ENCODE measurements at regions of chr19 and their contacts with region 1.

Region 1: DNA sequence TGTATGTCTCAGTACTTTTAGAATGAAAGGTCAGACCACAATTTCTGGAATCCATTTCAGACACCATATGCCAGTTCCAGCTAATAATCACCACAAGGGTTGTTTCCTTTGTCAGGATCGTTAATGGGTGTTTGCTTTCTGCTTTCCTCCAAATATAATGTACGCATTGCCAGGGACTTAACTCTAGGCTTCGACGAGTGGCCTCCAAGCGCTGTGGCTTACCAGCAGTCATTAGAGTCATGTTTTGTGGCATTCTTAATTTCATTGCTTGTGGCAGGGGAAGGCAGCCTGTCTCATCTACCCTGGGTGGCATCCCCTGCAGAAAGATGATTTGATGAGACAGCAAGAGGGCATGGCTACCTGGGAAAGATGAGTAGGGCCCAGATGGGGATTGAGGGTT is 22.5 kb downstream of the SAFB start:
- DNase-seq: no peak
- H3K4me3 ChIP-seq: no peak overlapping the region
- H3K27ac ChIP-seq: no peak overlapping the region
- H3K4me1 ChIP-seq: no peaks in the 10 kb centered on the region
- H3K27me3 ChIP-seq: no peaks in the 10 kb centered on the region
- CTCF ChIP-seq: no peak
- POLR2A ChIP-seq: no peak

Region 2: DNA sequence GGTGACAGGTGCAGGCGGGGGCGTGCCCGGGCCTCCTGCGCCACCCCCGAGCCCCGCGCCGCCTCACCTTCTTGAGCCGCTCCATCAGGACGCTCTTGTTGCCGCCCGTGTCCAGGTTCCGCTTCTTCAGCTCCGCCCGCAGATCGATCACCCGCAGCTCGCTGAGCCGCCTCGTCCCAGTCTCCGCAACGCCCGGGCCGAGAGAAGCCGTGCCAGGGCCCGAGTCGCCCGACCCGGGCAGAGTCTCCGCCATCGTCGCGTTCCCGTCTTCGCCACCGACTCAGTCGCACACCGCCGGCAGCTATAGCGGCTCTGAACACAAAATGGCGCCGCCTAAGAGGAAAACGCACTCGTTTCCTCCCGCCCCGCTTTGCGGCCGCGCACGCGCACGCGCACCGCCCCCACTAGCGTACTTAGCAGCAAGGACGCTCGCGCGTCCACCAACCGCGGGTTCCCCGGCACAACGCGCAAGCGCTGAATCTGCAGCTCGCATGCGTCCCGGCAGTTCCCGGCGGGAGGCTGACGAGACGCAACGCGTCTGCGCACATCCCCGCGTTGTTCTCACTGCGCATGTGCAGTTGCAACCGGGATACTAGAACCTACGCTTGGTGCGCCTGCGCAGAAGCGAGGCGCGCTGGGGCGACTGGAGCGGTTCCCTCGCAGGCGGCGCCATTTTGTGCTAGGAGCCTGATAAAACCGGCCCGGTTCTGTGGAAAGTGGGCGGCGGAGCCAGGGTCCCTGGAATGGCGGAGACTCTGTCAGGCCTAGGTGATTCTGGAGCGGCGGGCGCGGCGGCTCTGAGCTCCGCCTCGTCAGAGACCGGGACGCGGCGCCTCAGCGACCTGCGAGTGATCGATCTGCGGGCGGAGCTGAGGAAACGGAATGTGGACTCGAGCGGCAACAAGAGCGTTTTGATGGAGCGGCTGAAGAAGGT is 22.7 kb before region 1 on chr19 and contains the starts of genes SAFB and SAFB2:
- CTCF ChIA-PET with region 1: no interaction called
- POLR2A ChIA-PET with region 1: no interaction called
- dilution Hi-C with region 1: no loop called
- intact Hi-C with region 1: no loop called
- DNase-seq: peak; percentile 100
- H3K4me3 ChIP-seq: peak within 1 kb of the TSS; percentile 82 to 96 (median 93)
- H3K27ac ChIP-seq: peak within 1 kb of the TSS; percentile 63
- H3K4me1 ChIP-seq: peaks cover 28% of the 10 kb centered on the region
- H3K27me3 ChIP-seq: no peaks in the 10 kb centered on the region
- CTCF ChIP-seq: no peak
- POLR2A ChIP-seq: peak; percentile 94
- total RNA-seq, gene SAFB: 96.8 and 109 TPM in 2 replicates
- total RNA-seq, gene SAFB2: 83.7 and 85.9 TPM in 2 replicates

Region 3: DNA sequence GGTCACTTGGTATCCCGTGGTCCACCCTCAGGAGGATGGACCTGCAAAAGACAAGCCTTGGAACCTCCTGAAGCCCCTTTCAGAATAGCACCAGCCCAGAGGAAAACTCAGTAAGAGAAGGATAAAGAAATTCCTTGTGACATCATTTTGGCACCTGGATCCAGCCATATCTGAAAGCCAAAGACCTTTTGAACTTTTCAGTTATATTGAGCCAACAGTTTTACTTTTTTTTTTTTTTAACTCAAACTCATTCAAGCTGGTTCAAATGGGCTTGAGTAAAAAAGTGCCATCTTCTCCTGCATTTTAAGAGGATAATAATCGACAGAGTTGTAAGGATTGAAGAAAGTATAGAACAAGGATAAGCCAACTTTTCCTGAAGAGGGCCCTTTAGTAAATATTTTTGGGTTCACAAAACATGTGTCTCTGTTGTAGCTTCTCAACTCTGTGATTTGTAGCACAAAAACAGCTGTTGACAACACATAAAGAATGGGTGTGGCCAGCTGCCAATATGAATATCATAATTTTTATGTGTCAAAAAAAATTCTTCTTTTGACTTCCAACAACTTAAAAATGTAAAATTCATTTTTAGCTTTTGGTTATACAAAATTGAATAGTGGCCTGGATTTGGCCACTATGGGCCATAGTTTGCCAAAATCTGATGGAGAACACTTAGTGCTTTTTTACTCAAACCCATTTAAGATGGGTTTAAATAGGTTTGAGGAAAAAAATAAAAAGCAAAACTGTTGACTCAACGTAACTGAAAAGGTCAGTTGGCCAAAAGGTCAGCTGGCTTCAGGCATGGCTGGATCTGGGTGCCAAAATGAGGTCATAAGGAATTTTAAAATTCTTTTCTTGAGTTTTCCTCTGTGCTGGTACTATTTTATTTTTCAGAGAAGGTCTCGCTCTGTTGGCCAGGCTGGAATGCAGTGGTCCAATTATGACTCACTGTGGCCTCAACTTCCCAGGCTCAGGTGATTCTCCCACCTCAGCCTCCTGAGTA is 540.7 kb after region 1 on chr19:
- CTCF ChIA-PET with region 1: no interaction called
- POLR2A ChIA-PET with region 1: no interaction called
- dilution Hi-C with region 1: no loop called
- intact Hi-C with region 1: loop called (anchors 10 kb)
- DNase-seq: no peak
- H3K4me3 ChIP-seq: no peak overlapping the region
- H3K27ac ChIP-seq: no peak overlapping the region
- H3K4me1 ChIP-seq: no peaks in the 10 kb centered on the region
- H3K27me3 ChIP-seq: no peaks in the 10 kb centered on the region
- CTCF ChIP-seq: no peak
- POLR2A ChIP-seq: no peak

Measured in endothelial cell of umbilical vein (primary cell).